Ascending aorta (tissue), 2 donors: ENCODE measurements at regions of chr6 and their contacts with region 1.

Region 1: GRCh38 chr6:168956884-168957730 is 296.5 kb downstream of the THBS2 start:
- DNase-seq: peak in 1 of 2 donors; percentile 77
- H3K4me3 ChIP-seq: no peak overlapping the region
- H3K27ac ChIP-seq: no peak overlapping the region
- H3K4me1 ChIP-seq: peaks cover 0 to 3% of the 10 kb centered on the region in 2 donors
- H3K27me3 ChIP-seq: no peaks in the 10 kb centered on the region
- CTCF ChIP-seq: peak; percentile 78 to 90 (median 83)

Region 2: DNA sequence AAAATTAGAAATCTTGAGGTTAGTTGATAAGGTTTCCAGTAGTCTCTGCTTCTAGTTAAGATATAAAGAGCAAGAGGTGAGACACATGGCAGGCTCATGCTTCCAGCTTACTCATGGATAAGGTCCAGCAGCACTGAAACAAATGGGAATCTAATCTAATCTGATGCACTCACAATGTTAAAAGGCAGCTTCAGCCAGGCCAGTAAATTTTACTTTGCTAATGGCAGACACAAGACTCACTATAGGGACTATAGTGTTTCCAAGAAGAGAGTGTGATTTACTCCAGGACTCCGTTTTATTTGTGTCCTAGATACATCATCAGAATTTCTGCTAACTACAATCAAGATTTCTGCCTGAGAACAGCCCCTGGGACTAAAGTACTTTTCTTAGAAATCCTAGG is 191.4 kb before region 1 on chr6:
- intact Hi-C with region 1: no loop called
- DNase-seq: no peak
- H3K4me3 ChIP-seq: no peak overlapping the region
- H3K27ac ChIP-seq: no peak overlapping the region
- H3K4me1 ChIP-seq: no peaks in the 10 kb centered on the region
- H3K27me3 ChIP-seq: no peaks in the 10 kb centered on the region
- CTCF ChIP-seq: no peak

Region 3: GRCh38 chr6:168895102-168895812 is 61.9 kb before region 1 on chr6:
- intact Hi-C with region 1: loop called (anchors 2 kb)
- DNase-seq: peak in 1 of 2 donors; percentile 85
- H3K4me3 ChIP-seq: peak overlapping the region in 1 of 2 donors; percentile 35
- H3K27ac ChIP-seq: no peak overlapping the region
- H3K4me1 ChIP-seq: no peaks in the 10 kb centered on the region
- H3K27me3 ChIP-seq: no peaks in the 10 kb centered on the region
- CTCF ChIP-seq: peak; percentile 82 to 95 (median 91)

Region 4: DNA sequence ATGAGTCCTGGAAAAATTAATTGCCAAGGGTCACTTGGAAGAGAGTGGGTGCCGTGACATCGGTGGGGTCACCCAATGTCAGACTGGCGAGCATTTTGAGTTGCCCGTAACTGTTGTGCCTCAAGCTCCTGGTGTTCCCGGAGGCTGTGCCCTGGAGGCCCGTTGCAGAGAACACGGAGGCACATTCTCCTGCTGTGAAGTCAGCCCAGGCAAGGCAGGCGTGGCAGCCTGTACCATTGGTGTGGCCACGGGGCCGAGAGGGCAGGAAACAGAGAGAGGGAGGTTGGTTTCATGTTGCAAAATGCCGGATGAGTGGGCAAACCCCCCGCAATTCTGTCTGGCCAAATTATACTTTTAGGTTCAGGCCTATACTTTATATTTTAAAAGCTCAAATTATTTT is 215.3 kb after region 1 on chr6:
- intact Hi-C with region 1: loop called (anchors 5 kb)
- DNase-seq: peak; percentile 84 to 97
- H3K4me3 ChIP-seq: no peak overlapping the region
- H3K27ac ChIP-seq: peak overlapping the region; percentile 87 to 95
- H3K4me1 ChIP-seq: peaks cover 12 to 55% of the 10 kb centered on the region in 2 donors
- H3K27me3 ChIP-seq: no peaks in the 10 kb centered on the region
- CTCF ChIP-seq: no peak

Region 5: DNA sequence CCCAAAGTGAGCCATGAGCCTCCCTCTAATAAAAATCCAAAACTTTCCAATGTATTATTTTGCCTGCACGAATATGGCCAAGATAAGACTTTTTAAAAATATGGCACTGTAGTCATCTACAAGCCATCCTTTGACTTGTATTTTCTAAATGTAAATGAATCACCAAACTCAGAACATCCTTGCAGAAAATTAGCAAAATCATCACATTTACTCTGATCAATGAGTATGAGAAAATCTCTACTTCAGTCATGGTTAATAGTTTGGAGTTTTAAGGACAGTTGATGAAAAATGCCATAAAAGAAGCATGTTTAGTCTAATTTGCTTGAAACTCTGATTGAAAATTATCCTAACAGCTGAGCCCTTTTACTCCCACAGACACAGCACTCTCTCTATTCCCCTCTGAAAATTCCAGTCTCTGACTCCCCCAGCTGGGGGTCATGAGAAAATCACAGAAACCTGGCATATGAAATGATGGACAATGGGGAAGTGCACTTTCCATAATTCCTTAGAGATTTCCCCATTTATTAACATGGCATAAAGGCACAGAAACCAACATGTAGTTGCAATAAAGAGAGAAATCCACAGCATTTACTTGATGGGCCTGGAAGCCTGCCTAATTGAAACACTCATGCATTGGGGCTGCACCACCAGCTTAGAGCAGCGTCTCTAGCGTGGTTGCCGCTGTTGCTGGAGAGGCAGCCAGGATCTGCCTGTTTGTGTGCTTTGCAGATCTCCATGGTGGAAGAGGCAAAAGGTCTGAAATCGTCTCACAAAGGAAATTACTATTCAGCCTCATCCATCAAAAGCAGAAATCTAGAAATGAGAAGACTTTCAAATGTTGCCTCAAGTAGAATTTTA is 530.7 kb after region 1 on chr6:
- intact Hi-C with region 1: loop called (anchors 1 kb)
- DNase-seq: no peak
- H3K4me3 ChIP-seq: no peak overlapping the region
- H3K27ac ChIP-seq: no peak overlapping the region
- H3K4me1 ChIP-seq: peaks cover 12 to 21% of the 10 kb centered on the region in 2 donors
- H3K27me3 ChIP-seq: no peaks in the 10 kb centered on the region
- CTCF ChIP-seq: peak in 2 of 3 experiments; percentile 5 to 29

Region 6: DNA sequence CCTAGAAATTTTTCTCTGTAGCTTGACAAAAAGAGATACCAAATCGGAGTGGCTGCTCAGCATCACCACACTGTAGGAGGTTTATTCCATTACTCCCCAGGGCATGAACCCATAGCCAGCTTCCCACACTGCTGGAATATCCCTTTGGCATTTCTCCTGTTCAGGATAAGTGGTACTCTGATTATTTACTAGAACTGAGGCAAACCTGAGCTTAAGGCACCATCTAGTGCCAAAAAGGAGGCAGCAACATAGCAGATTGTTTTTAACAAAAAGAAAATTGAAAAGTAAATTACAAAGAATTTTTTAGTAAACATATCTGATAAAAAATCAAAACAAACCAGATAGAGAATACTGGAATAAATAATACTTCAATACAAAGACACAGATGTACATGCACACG is 563.0 kb after region 1 on chr6:
- intact Hi-C with region 1: loop called (anchors 1 kb)
- DNase-seq: no peak
- H3K4me3 ChIP-seq: no peak overlapping the region
- H3K27ac ChIP-seq: no peak overlapping the region
- H3K4me1 ChIP-seq: no peaks in the 10 kb centered on the region
- H3K27me3 ChIP-seq: no peaks in the 10 kb centered on the region
- CTCF ChIP-seq: peak; percentile 22 to 50 (median 29)

Region 7: DNA sequence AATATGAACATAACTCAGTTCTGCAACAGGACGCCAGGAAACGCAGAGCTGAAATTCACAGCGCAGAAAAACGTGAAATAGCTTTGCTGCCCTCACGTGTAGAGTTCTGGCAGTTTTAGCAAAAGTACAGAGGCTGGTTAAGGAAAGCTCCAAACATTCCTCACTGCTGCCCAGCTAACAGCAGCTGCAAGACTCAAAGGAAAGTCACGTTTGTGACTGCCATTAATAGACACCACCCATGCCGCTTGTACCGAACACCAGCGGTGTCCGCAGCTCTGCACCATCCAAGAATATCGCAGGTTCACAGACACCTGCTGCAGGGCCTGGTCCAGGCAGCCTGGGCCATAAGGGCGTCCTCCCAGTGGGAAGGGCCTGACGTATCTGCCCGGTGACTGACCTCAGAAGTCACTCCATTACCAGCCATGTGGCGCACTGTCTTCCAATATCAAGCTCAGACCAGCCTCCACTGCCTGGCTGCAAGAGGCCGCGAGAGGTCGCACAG is 683.3 kb after region 1 on chr6:
- intact Hi-C with region 1: loop called (anchors 1 kb)
- DNase-seq: no peak
- H3K4me3 ChIP-seq: no peak overlapping the region
- H3K27ac ChIP-seq: no peak overlapping the region
- H3K4me1 ChIP-seq: no peaks in the 10 kb centered on the region
- H3K27me3 ChIP-seq: no peaks in the 10 kb centered on the region
- CTCF ChIP-seq: peak; percentile 36 to 51 (median 46)